ENCODE measurements at regions of chr15 and their contacts with region 1.

Region 1: DNA sequence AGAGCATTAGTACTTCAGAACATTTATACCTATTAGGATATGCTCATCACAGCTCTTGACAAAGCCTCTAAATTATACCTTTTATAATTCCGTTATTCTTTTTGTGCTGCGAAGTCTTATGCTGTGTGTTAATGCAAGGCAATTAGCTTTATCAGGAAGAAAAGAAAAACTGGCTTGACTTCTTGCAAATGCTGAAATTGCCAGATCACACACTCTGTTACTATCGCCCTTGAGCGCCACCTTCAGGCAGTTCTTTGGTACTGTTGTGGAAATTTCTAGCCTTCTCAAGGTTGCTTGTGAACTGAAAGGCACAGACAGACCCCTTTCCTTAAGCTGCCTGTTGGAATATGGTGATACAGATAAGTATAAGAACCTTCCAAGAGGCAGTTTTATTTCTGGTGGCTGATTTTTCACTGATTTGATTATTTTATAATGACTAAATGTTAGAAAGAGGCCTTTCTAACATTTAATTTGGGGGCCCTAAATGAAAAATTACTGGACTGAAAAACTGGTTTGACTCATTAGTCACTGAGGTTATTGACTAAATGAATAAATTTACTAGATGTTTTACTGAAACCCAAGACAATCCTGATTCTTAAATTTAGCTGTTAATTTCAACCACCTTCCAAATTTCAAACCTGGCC is 126.2 kb upstream of the RASGRP1 start:
- H3K4me3 ChIP-seq: no peak overlapping the region
- H3K27ac ChIP-seq: no peak overlapping the region
- H3K4me1 ChIP-seq: no peaks in the 10 kb centered on the region
- CTCF ChIP-seq: no peak

Region 2: DNA sequence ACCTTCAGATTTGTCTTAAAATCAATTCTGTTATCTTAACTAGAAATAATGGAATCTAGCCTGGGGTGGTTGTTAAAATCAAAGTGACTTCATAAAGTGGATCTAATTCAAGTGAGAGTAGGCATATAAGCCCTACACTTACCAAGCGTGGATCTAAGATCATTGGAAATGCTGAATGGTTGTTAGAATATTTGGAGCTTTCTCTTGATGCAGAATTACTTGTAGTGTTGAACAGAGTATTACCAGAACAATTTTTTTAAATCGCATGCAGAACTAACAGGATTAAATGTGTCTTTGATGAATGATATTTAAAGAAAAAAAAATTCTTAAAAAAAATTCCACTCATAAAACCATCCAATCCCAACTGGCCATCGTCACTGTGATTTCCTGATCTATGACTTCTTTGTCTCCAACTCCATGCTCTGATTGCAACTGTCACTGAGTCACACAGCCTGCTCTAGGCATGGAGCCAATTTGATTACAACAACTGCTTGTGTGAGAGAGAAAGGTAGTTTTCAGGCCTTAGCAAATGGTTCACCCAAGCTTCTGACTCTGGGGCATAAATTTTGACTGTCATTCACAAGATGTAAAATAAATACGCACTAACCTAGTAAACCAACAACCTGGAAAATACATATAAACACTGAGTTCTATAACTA is 464.1 kb before region 1 on chr15:
- CTCF ChIA-PET with region 1: no interaction called
- POLR2A ChIA-PET with region 1: no interaction called
- H3K4me3 ChIP-seq: no peak overlapping the region
- H3K27ac ChIP-seq: no peak overlapping the region
- H3K4me1 ChIP-seq: peaks cover 13% of the 10 kb centered on the region
- CTCF ChIP-seq: no peak

Region 3: GRCh38 chr15:38474155-38474757 is 216.6 kb before region 1 on chr15:
- CTCF ChIA-PET with region 1: interaction called, 30 read pairs
- POLR2A ChIA-PET with region 1: no interaction called
- H3K4me3 ChIP-seq: no peak overlapping the region
- H3K27ac ChIP-seq: no peak overlapping the region
- H3K4me1 ChIP-seq: no peaks in the 10 kb centered on the region
- CTCF ChIP-seq: no peak

Region 4: GRCh38 chr15:38809621-38810020 is 118.8 kb after region 1 on chr15:
- CTCF ChIA-PET with region 1: no interaction called
- POLR2A ChIA-PET with region 1: no interaction called
- H3K4me3 ChIP-seq: no peak overlapping the region
- H3K27ac ChIP-seq: no peak overlapping the region
- H3K4me1 ChIP-seq: no peaks in the 10 kb centered on the region
- CTCF ChIP-seq: no peak

Measured in HEK293 (cell line).